ENCODE measurements at regions of chr1 and their contacts with region 1.

Region 1: DNA sequence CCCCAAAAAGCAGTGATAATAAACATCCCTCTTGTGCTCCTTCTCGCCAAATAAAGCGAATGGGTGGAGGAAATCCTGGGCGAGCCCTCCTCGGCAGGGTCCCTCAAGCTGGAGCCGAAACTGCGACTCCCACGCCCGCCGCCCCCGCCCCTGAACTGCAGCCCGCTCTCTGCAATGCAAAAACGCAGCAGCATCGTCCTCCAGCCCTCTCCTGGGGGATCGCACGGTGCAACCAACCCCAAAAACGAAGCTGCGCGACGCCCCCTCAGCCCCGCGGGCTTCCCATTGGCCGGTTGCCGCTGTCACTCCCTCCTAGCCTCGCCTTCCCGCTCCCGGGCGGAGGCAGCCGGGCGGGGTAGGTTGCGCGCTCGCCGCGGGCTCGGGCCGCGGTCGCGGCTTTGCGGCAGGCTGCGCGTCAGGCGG is at the start of gene TMCC2:
- DNase-seq: peak; percentile 88
- H3K4me3 Mint-ChIP-seq: peak within 1 kb of the TSS; percentile 84
- H3K27ac Mint-ChIP-seq: no peak within 1 kb of the TSS
- H3K4me1 Mint-ChIP-seq: peaks cover 34% of the 10 kb centered on the region
- H3K27me3 Mint-ChIP-seq: peaks cover 10% of the 10 kb centered on the region
- total RNA-seq, gene TMCC2: 9.8 to 10.1 TPM

Region 2: DNA sequence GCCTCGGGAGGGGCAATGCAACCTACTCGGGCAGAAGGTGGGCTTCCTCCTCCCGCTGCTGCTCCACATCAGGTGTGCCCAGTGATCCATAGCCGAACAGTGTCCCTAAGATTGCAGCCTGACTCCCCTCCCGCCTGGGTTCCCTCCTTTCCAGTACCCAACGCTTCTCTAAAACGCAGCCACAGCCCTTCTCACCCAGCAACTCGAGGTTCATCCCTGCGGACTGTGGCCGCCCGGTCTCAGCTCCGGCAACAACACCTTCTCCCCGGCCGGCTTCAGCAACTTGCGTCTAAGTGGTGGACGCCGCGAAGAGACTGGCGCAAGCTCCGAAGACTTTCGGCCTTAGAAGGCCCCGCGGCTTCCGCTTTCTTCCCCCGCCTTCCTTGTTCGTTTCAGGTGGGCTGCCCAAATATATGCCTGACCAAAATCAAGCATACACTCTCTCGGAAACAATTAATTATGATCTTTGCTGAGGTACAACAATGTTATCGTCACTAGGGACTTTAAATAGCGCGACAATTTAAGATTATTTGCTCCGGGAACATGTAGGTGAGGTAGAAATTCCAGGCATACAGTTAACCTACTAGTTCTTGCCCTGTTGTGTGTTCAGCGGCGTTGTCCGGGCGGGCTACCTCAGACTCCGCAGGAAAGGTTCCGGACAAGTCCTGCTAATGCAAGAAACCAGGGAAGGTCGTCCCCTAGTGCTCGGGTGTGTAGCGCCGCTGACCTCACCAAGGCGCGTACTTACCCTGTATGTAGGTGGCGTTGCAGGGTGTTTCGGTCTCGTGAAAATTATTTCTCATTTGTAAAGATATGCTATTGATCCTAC is 105.7 kb before region 1 on chr1 and contains the start of gene RBBP5:
- CTCF ChIA-PET with region 1: interaction called, 7 read pairs
- POLR2A ChIA-PET with region 1: interaction called, 4 read pairs
- intact Hi-C with region 1: loop called (anchors 1 kb)
- DNase-seq: peak; percentile 97
- H3K4me3 Mint-ChIP-seq: peak within 1 kb of the TSS; percentile 98
- H3K27ac Mint-ChIP-seq: peak within 1 kb of the TSS; percentile 98
- H3K4me1 Mint-ChIP-seq: peaks cover 34% of the 10 kb centered on the region
- H3K27me3 Mint-ChIP-seq: no peaks in the 10 kb centered on the region
- total RNA-seq, gene RBBP5: 23.5 to 25.9 TPM

Region 3: DNA sequence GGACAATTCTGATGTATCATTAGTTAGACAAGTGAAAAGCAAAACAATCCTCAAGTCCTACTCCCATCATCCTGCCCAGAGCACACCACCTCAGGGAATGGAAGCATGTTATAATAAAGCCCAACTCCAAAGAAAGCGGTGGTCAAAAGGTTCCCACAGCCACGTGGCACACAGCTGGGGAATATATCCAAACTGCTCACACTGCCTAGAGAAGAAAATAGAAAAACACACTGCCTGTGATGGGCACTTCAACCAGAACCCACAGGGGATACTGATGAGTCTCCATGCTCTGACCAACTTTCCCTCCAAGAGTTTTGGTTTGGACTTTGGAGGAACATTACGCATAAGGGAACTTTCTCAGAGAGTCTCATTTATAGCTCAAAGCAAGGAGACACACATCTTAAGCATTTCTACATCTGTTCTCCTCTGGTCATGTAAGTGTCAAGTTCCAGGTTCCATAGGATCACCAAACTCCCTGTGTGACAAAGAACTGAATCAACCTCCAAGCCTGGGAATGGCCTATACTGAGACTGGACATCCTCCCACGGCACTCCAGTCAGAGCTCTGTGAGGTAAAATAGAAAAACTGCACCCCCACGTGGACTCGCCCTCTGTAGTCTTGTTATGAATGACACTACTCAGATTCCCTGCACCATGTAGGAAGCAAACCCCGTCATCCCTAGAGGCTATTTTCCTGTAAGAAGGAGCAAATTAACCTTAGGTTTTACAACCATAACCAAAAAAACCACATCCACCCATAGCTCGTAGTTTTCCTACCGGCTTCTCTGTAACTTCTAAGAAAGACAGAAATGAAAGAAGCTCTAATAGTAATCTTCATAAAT is 28.3 kb before region 1 on chr1:
- CTCF ChIA-PET with region 1: interaction called, 16 read pairs
- POLR2A ChIA-PET with region 1: interaction called, 11 read pairs
- intact Hi-C with region 1: no loop called
- DNase-seq: peak; percentile 69
- H3K4me3 Mint-ChIP-seq: peak overlapping the region; percentile 54
- H3K27ac Mint-ChIP-seq: peak overlapping the region; percentile 82
- H3K4me1 Mint-ChIP-seq: peaks cover 53% of the 10 kb centered on the region
- H3K27me3 Mint-ChIP-seq: no peaks in the 10 kb centered on the region

Region 4: GRCh38 chr1:205217418-205217817 is 10.2 kb before region 1 on chr1:
- CTCF ChIA-PET with region 1: interaction called, 18 read pairs
- POLR2A ChIA-PET with region 1: interaction called, 10 read pairs
- intact Hi-C with region 1: no loop called
- DNase-seq: no peak
- H3K4me3 Mint-ChIP-seq: no peak overlapping the region
- H3K27ac Mint-ChIP-seq: no peak overlapping the region
- H3K4me1 Mint-ChIP-seq: peaks cover 12% of the 10 kb centered on the region
- H3K27me3 Mint-ChIP-seq: peaks cover 1% of the 10 kb centered on the region

Region 5: GRCh38 chr1:205247130-205247921 is 19.7 kb after region 1 on chr1:
- CTCF ChIA-PET with region 1: interaction called, 338 read pairs
- POLR2A ChIA-PET with region 1: interaction called, 3 read pairs
- intact Hi-C with region 1: loop called (anchors 2 kb)
- DNase-seq: peak; percentile 47
- H3K4me3 Mint-ChIP-seq: no peak overlapping the region
- H3K27ac Mint-ChIP-seq: no peak overlapping the region
- H3K4me1 Mint-ChIP-seq: peaks cover 14% of the 10 kb centered on the region
- H3K27me3 Mint-ChIP-seq: peaks cover 5% of the 10 kb centered on the region

Region 6: DNA sequence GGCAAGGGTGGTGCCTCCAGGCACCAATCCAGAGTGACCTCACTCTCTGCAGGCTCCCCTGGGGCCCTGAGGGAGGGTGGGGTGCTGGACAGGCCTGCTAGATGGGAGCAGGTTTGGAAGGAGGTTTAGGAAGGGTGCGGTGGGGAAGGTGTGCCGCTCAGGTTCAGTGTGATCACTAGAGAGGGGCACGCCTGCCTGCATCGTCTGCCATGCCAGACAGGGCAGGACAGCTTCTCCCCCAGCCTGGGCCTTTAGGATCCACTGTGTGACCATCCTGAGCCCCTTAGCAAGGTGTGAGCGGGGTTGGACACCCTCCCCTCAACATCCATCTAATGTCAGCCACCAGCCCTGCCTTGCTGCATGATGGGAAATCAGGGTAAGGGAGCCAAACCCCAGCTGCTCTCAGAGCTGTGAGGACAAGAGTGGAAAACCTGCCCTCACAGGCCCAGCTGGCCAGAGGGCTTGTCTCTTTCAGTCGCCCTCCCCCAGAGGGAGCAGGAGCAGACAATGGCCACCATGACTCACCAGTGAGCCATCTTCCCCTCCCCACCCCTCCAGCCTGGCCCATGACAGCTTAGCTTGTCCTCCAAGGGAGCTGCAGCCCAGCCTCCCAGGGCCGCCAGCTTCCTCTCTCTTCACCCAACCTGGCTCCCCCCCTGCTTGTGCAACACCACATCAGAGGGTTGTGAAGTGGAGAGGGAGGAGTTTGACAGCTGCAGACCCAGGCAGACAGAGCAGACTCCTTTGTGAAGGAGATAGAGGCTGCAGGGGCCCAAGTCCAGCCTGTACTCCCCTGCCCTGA is 56.9 kb after region 1 on chr1:
- CTCF ChIA-PET with region 1: interaction called, 6 read pairs
- POLR2A ChIA-PET with region 1: no interaction called
- intact Hi-C with region 1: loop called (anchors 2 kb)
- DNase-seq: peak; percentile 95
- H3K4me3 Mint-ChIP-seq: peak overlapping the region; percentile 38
- H3K27ac Mint-ChIP-seq: peak overlapping the region; percentile 68
- H3K4me1 Mint-ChIP-seq: peaks cover 77% of the 10 kb centered on the region
- H3K27me3 Mint-ChIP-seq: no peaks in the 10 kb centered on the region